SK-N-SH (cell line): ENCODE measurements at regions of chr12 and their contacts with region 1.

Region 1: GRCh38 chr12:130031571-130032189 is 127.9 kb upstream of the TMEM132D start:
- DNase-seq: peak; percentile 82
- H3K4me3 ChIP-seq: no peak overlapping the region
- H3K27ac ChIP-seq: no peak overlapping the region
- H3K4me1 ChIP-seq: no peaks in the 10 kb centered on the region
- H3K27me3 ChIP-seq: no peaks in the 10 kb centered on the region
- CTCF ChIP-seq: peak; percentile 71
- EP300 ChIP-seq: no peak
- RAD21 ChIP-seq: peak; percentile 47

Region 2: DNA sequence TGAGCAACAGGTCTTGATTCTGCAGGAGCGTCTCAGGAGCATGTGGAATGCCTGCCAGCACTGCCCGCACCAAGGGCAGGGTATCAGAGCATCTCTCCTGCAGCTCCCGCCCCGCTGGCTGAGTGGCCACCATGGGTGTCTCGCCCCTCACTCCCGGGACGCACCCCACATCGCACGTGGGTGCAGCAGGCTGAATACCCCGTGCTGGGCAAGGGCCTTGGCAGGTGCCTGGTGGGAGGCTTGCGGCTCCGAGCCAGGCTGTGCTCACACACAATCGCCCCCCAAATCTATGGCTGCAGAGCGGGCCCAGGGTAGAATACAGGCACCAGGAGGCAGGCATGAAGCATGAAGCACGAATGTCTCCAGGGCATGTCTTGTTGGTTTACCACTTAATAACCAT is 23.9 kb before region 1 on chr12:
- CTCF ChIA-PET with region 1: interaction called, 13 read pairs
- POLR2A ChIA-PET with region 1: no interaction called
- DNase-seq: no peak
- H3K4me3 ChIP-seq: no peak overlapping the region
- H3K27ac ChIP-seq: no peak overlapping the region
- H3K4me1 ChIP-seq: no peaks in the 10 kb centered on the region
- H3K27me3 ChIP-seq: no peaks in the 10 kb centered on the region
- CTCF ChIP-seq: no peak
- EP300 ChIP-seq: no peak
- RAD21 ChIP-seq: no peak

Region 3: GRCh38 chr12:130320536-130320935 is 288.9 kb after region 1 on chr12:
- CTCF ChIA-PET with region 1: interaction called, 15 read pairs
- POLR2A ChIA-PET with region 1: no interaction called
- DNase-seq: no peak
- H3K4me3 ChIP-seq: no peak overlapping the region
- H3K27ac ChIP-seq: no peak overlapping the region
- H3K4me1 ChIP-seq: no peaks in the 10 kb centered on the region; a peak in 2 of 4 replicates
- H3K27me3 ChIP-seq: no peaks in the 10 kb centered on the region
- CTCF ChIP-seq: no peak
- EP300 ChIP-seq: peak in 1 of 2 experiments; percentile 65; a peak in 1 of 4 replicates
- RAD21 ChIP-seq: no peak

Region 4: DNA sequence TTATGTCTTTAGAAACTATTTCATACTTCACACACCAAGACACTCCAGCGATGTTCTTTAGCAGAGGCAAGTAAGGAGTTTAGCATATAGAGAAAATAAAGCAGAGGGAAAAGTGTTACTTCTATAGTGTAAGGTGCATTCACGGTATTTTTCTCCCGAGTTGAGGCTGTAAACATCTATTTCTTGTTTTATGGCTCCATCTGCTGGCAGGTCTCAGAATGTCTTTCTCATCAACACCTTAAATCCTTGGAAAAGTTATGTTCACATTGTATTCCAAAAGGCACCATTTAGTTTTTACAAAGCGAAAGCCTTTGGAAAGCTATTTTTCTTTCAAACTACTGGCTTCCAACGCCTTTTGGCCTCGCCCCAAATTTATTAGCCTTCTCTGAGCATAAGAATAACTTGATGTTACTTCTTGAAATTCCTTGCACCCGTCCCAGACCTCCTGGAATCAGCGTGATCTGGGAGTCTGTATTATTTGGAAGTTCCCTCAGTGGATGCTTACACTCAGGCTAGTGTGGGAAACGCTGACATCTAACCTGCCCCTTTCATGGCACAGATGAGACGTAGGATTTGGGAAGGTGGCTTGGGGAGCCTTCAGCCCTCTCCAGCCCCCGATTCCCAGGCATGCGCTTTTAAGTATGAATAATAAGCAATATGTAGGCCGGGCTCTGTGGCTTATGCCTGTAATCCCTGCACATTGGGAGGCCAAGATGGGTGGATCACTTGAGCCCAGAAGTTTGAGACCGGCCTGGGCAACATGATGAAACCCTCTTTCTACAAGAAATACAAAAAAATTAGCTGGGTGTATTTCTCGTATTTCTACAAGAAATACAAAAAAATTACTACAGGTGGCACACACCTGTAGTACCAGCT is 304.1 kb after region 1 on chr12:
- CTCF ChIA-PET with region 1: interaction called, 27 read pairs
- POLR2A ChIA-PET with region 1: no interaction called
- DNase-seq: peak; percentile 70
- H3K4me3 ChIP-seq: no peak overlapping the region
- H3K27ac ChIP-seq: no peak overlapping the region
- H3K4me1 ChIP-seq: peaks cover 0 to 2% of the 10 kb centered on the region in 2 experiments; a peak in 1 of 4 replicates
- H3K27me3 ChIP-seq: no peaks in the 10 kb centered on the region
- CTCF ChIP-seq: peak; percentile 64
- EP300 ChIP-seq: no peak
- RAD21 ChIP-seq: peak; percentile 95